MCF 10A (cell line): ENCODE measurements at regions of chr11 and their contacts with region 1.

Region 1: DNA sequence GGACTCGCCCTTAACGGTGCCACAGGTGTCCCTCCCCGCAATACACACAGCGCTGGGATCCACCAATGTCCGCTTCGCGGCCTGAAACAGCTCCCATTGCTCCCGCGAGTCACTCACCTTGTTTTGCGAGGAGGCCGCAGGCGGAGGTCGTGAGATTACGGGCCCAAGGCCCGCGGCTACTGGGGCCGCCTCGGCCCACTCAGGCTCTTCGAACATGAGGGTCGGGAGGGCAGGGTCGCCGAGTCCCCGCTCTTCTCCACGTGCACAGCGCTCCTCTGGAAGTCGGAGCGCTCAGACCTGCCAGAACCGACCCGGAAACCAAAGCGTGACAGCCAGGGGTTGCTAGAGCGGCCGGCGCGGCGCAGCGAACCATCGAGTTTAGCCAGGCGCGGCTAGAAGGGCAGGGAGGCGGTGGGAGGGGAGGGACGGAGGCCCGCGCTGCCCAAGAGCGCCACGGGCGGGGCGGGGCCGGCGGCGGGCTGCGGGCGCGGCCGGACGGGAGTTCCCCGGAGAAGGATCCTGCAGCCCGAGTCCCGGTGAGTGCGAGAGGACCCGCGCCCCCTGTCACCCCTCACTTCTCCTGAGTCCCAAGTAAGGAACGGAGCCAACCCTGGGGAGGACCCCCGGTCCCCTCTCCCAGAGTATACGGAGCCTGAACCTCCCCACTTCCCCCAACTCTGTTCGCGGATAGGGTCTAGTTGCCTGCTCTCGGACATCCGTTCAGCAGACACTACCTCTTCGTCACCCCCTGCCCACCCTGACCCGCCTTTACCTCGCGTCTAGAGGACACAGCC is at the starts of genes ILK and RRP8:
- DNase-seq: peak; percentile 90
- H3K4me3 Mint-ChIP-seq: no peak within 1 kb of the TSS
- H3K27ac Mint-ChIP-seq: no peak within 1 kb of the TSS
- H3K4me1 Mint-ChIP-seq: peaks cover 22% of the 10 kb centered on the region
- H3K27me3 Mint-ChIP-seq: no peaks in the 10 kb centered on the region
- CTCF ChIP-seq: no peak
- total RNA-seq, gene ILK: 78.9 and 92.3 TPM in 2 replicates
- total RNA-seq, gene RRP8: 23.4 and 27.6 TPM in 2 replicates

Region 2: DNA sequence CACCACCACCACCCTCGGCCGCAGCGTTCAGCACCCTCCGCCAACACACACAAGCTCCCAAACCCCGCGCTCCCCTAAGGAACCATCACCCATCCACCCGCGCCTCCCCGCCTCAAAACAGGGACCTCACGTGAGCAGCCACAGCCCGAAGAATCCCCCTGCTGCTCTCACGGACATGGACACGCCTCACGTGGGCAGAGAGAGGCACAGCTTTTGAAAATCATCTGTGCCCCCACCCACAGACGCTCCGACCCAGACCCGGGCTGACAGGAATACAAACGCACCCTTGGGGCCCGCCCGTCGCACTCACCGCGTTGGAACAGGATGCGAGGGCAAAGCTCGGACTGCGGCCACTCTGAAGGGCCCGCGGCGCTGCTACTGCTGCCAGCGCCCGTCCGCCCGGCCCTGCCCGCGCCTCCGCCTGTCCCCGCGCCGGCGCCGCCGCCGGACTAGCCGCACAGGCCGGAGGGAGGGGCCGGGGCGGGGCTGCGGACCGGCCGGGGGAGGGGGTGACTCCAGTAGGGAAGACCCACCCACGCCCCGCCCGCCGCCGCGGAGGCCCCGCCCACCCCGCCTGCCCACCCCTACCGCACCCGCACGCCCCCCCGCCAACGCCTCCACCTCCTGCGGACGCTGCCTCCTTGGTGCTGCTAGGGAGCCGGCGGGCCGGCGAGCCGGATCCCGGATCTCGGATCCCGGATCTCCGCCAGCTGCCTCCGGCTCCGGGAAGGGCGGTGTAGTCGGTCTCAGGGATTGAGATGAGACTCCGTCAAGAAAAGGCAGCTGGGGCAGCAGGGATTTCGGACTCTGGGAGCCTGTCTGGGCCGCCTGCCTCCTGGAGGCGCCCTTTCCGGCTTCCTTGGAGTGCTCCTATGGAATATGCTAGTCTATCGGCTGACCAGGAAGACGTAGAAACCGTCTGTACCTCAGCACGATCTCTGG is 129.7 kb before region 1 on chr11 and contains the start of gene TRIM3:
- CTCF ChIA-PET with region 1: no interaction called
- POLR2A ChIA-PET with region 1: interaction called, 3 read pairs
- intact Hi-C with region 1: loop called (anchors 10 kb)
- DNase-seq: peak; percentile 83
- H3K4me3 Mint-ChIP-seq: peak within 1 kb of the TSS; percentile 83
- H3K27ac Mint-ChIP-seq: peak within 1 kb of the TSS; percentile 87
- H3K4me1 Mint-ChIP-seq: peaks cover 11% of the 10 kb centered on the region
- H3K27me3 Mint-ChIP-seq: no peaks in the 10 kb centered on the region
- CTCF ChIP-seq: no peak
- total RNA-seq, gene TRIM3: 7.3 and 7.4 TPM in 2 replicates

Region 3: DNA sequence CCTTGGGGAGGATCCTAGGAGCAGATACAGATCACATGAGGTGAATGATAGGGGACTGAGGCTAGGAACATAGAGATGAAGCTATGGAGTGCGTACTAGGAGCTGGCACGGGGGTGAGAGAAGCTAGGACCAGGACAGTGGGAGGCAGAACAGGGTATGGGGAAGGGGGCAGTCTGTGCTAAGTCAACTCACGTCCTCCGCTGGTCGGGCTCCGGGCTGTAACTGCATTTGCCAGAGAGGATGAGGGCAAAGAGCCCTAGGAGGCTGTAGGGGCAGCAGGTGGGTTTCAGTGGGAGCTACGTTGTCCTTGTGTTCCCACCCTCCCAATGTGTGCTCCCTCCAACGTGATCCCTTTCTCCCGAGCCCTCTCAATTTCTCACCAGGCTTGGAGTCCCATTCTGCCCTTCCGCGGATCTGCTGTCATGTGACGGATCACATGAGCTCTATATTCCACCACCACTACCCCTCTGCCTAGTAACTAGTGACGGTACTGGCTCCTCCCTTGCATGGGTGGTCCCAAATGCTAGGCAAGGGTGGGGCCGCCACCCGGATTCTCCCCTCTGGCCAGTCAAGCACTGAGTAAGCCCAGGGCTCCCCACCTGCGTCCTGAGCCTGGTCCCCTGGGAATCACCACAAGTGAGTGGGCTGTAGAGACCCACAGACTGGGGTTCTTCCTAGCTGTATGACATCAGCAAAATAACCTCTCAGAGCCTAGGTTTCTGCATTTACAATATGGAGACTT is 15.7 kb after region 1 on chr11 and contains the start of gene TPP1:
- CTCF ChIA-PET with region 1: interaction called, 17 read pairs
- POLR2A ChIA-PET with region 1: interaction called, 56 read pairs
- intact Hi-C with region 1: no loop called
- DNase-seq: peak; percentile 96
- H3K4me3 Mint-ChIP-seq: no peak within 1 kb of the TSS
- H3K27ac Mint-ChIP-seq: no peak within 1 kb of the TSS
- H3K4me1 Mint-ChIP-seq: no peaks in the 10 kb centered on the region
- H3K27me3 Mint-ChIP-seq: no peaks in the 10 kb centered on the region
- CTCF ChIP-seq: no peak
- total RNA-seq, gene TPP1: 26.9 and 46.5 TPM in 2 replicates

Region 4: GRCh38 chr11:7513234-7514098 is 910.0 kb after region 1 on chr11 and contains the start of gene PPFIBP2:
- CTCF ChIA-PET with region 1: no interaction called
- POLR2A ChIA-PET with region 1: no interaction called
- intact Hi-C with region 1: no loop called
- DNase-seq: peak; percentile 70
- H3K4me3 Mint-ChIP-seq: peak within 1 kb of the TSS; percentile 83
- H3K27ac Mint-ChIP-seq: peak within 1 kb of the TSS; percentile 52
- H3K4me1 Mint-ChIP-seq: no peaks in the 10 kb centered on the region
- H3K27me3 Mint-ChIP-seq: peaks cover 17% of the 10 kb centered on the region
- CTCF ChIP-seq: peak; percentile 74
- total RNA-seq, gene PPFIBP2: 3.5 and 4.3 TPM in 2 replicates